ENCODE measurements at regions of chr10 and their contacts with region 1.

Region 1: GRCh38 chr10:12405342-12406320 is 56.3 kb downstream of the CAMK1D start:
- DNase-seq: no peak
- H3K4me3 ChIP-seq: no peak overlapping the region
- H3K27ac ChIP-seq: no peak overlapping the region
- H3K4me1 ChIP-seq: no peaks in the 10 kb centered on the region
- H3K27me3 ChIP-seq: no peaks in the 10 kb centered on the region
- CTCF ChIP-seq: no peak

Region 2: DNA sequence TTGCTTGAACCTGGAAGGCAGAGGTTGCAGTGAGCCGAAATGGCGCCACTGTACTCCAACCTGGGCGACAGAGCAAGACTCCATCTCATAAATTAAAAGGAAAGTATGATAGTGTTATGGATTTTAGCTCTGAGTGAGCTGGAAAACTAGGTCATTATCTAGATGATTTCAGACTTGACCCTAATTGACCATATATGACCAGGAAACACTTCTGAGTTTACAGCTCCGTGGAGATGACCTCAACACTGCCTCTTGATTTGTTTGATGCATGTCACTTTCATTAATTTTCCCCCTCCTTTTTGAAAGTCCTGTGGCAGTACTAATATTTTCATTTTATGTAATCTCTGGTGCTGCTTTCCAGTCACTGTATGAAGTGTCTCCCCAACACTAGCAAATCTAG is 284.0 kb before region 1 on chr10:
- CTCF ChIA-PET with region 1: interaction called, 11 read pairs
- POLR2A ChIA-PET with region 1: no interaction called
- intact Hi-C with region 1: no loop called
- DNase-seq: no peak
- H3K4me3 ChIP-seq: no peak overlapping the region
- H3K27ac ChIP-seq: no peak overlapping the region
- H3K4me1 ChIP-seq: no peaks in the 10 kb centered on the region
- H3K27me3 ChIP-seq: no peaks in the 10 kb centered on the region
- CTCF ChIP-seq: no peak

Measured in PC-9 (cell line).